Thyroid gland (tissue), 4 donors: ENCODE measurements at regions of chr20 and their contacts with region 1.

Region 1: GRCh38 chr20:44475694-44476560 is at the start of gene TTPAL:
- DNase-seq: peak; percentile 90 to 93
- H3K4me3 ChIP-seq: peak within 1 kb of the TSS; percentile 29 to 95 (median 70)
- H3K27ac ChIP-seq: peak within 1 kb of the TSS; percentile 95 to 96 (median 96)
- H3K4me1 ChIP-seq: peaks cover 14 to 15% of the 10 kb centered on the region in 2 donors
- H3K27me3 ChIP-seq: no peaks in the 10 kb centered on the region
- CTCF ChIP-seq: peak in 4 of 6 experiments; percentile 45 to 69 (median 50)
- POLR2A ChIP-seq: peak; percentile 93 to 99
- total RNA-seq, gene TTPAL: 14.2 to 27.7 (median 22.3) TPM

Region 2: DNA sequence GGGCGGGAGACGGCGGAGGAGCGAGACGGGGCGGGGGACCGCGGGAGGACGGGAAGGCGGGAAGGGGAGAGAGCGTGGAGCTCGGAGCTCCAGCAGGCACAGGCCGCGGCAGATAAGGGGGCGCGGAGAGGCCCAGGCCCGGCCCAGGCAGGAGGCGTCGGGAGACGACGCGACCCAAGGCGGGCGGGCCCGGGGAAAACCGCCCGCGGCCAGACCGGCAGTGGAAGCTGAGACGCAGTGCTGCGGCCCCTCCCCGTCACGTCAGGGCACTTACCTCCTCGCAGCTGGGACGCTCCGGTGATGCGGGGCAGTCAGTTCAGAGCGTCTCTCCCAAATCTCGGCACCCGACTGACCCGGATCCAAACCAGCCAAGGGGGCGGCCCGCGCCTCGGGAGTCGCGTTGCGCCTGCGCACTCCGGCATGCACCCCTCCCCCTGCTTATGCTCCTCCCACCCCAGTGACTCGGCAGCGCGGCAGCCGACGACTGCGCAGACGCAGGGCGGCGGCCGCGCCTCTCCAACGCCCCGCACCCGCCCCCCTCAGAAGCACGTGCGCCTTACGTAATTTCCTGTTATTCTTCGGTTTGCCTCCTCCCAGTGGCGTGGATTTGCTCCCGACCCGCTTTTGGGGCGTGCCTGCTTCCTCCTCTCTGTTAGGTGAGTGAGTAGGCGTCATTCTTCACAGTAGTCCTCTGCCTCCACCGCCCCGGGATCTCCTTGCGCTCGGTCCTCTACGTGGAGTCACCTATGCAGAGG is 265.3 kb before region 1 on chr20 and contains the start of gene OSER1:
- intact Hi-C with region 1: loop called (anchors 10 kb)
- DNase-seq: peak; percentile 98
- H3K4me3 ChIP-seq: peak within 1 kb of the TSS; percentile 73 to 83 (median 73)
- H3K27ac ChIP-seq: peak within 1 kb of the TSS; percentile 87 to 95 (median 93)
- H3K4me1 ChIP-seq: peaks cover 27 to 31% of the 10 kb centered on the region in 2 donors
- H3K27me3 ChIP-seq: no peaks in the 10 kb centered on the region
- CTCF ChIP-seq: no peak
- POLR2A ChIP-seq: peak; percentile 87 to 95
- total RNA-seq, gene OSER1: 36.2 to 56.4 (median 43.0) TPM

Region 3: GRCh38 chr20:44609511-44610312 is 133.8 kb after region 1 on chr20:
- intact Hi-C with region 1: loop called (anchors 10 kb)
- DNase-seq: peak; percentile 91 to 93
- H3K4me3 ChIP-seq: no peak overlapping the region
- H3K27ac ChIP-seq: peak overlapping the region; percentile 54 to 96 (median 90)
- H3K4me1 ChIP-seq: peaks cover 18 to 31% of the 10 kb centered on the region in 2 donors
- H3K27me3 ChIP-seq: no peaks in the 10 kb centered on the region
- CTCF ChIP-seq: peak; percentile 91 to 99 (median 98)
- POLR2A ChIP-seq: peak in 1 of 2 donors; percentile 29